ENCODE measurements at regions of chr1 and their contacts with region 1.

Region 1: DNA sequence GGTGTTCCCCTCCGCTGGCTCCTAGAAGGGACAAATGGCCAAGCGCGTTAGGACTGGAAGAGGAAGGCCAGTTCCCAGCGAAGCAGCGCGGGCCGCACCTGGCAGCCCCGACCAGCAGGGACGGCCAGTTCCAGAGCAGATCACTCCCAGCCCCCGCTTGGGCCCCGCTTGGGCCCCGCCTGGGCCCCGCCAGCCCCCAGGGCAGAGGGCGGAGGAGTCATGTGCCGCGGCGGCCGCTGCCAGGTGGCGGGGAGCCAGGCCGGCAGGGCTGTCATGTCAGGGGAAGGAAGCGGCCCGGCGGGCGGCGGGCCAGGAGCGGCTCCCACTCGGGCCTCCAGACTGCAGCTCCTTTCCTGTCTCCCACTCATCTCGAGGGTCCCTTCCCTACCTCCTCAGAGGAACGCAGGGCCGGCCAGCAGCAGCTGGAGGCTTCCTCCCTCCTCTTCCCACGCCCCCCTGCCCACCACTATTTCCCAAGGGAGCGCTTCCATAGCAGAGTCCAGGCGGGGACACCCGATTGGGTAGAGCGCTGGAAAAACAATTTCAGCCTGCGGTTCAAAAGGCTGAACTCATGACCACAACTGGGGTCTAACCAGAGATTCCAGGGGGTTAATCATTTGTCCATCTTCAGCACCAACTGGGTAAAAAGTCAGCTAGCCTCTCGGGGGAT is 16.5 kb downstream of the ZNF697 start:
- DNase-seq: peak in 7 of 10 donors; percentile 43 to 77 (median 53)
- H3K4me3 ChIP-seq: peak overlapping the region; percentile 32 to 69 (median 54)
- H3K27ac ChIP-seq: peak overlapping the region in 45 of 59 donors; percentile 2 to 79 (median 54)
- H3K27me3 ChIP-seq: no peaks in the 10 kb centered on the region
- CTCF ChIP-seq: peak in 13 of 56 donors; percentile 7 to 34 (median 15)

Region 2: GRCh38 chr1:119582801-119583200 is 48.8 kb before region 1 on chr1:
- intact Hi-C with region 1: no loop called
- DNase-seq: peak; percentile 16 to 72 (median 59)
- H3K4me3 ChIP-seq: no peak overlapping the region
- H3K27ac ChIP-seq: peak overlapping the region in 2 of 59 donors; percentile 31 to 37
- H3K27me3 ChIP-seq: no peaks in the 10 kb centered on the region
- CTCF ChIP-seq: peak in 54 of 56 donors; percentile 26 to 74 (median 54)

Region 3: DNA sequence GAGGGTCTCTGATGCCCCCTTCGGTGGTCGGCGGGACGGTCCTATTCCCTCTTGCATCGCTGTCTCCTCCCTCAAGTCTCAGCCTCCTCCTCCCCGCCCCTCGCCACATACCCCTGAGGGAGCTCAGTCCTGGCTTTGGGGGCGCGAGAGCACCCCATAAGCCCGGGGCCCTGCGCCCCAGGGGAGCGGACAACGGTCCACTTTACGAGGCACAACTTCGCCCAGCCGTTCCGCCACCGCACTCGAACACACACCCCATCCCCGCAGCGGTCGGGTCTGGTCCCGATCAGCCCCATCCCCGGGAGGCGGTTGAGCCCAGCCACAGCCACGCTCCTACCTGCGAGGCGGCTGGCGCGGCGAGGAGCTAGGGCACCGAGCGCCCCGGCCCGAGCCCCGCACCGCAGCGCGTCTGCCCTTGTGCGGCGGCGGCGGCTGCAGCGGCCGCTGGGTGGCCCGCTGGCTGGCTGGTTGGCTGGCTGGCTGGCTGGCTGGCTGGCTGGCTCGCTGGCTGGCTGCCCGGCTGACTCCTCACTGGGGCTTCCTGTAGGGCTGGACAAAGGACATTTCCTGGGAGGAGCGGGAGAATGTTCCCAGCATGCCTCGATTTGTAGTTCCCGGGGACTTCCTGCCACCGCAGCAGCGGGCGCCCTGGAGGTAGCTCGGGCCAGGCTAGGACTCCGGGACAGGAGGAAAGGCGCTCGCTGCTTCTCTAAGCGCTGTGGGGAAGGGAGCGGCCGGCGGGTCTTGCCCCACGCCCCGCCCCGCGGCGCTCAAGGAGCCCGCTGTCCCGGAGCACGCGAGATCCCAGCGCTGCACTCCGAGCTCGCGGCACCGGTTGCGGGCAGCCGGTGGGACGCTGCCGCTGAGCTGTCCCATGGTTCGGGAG is 16.4 kb after region 1 on chr1 and contains the start of gene ZNF697:
- intact Hi-C with region 1: loop called in 1 of 2 experiments (anchors 1 kb)
- DNase-seq: peak; percentile 96 to 99 (median 98)
- H3K4me3 ChIP-seq: peak within 1 kb of the TSS; percentile 57 to 98 (median 87)
- H3K27ac ChIP-seq: peak within 1 kb of the TSS; percentile 20 to 94 (median 80)
- H3K27me3 ChIP-seq: no peaks in the 10 kb centered on the region
- CTCF ChIP-seq: peak in 38 of 56 donors; percentile 8 to 61 (median 32)
- total RNA-seq, gene ZNF697: 5.5 to 31.1 (median 20.7) TPM